Mammary epithelial cell (primary cell): ENCODE measurements at regions of chr1 and their contacts with region 1.

Region 1: GRCh38 chr1:57897581-57897980 is 473.7 kb upstream of the DAB1 start:
- DNase-seq: no peak
- H3K4me3 ChIP-seq: no peak overlapping the region
- H3K27ac ChIP-seq: no peak overlapping the region
- H3K4me1 ChIP-seq: peaks cover 34% of the 10 kb centered on the region
- H3K27me3 ChIP-seq: no peaks in the 10 kb centered on the region
- CTCF ChIP-seq: no peak

Region 2: GRCh38 chr1:57966751-57967406 is 69.3 kb after region 1 on chr1:
- CTCF ChIA-PET with region 1: no interaction called
- dilution Hi-C with region 1: loop called (anchors 5 kb)
- in situ Hi-C with region 1: no loop called
- intact Hi-C with region 1: no loop called
- DNase-seq: peak; percentile 58
- H3K4me3 ChIP-seq: no peak overlapping the region
- H3K27ac ChIP-seq: no peak overlapping the region
- H3K4me1 ChIP-seq: no peaks in the 10 kb centered on the region
- H3K27me3 ChIP-seq: no peaks in the 10 kb centered on the region
- CTCF ChIP-seq: no peak